ENCODE measurements at regions of chr12 and their contacts with region 1.

Region 1: DNA sequence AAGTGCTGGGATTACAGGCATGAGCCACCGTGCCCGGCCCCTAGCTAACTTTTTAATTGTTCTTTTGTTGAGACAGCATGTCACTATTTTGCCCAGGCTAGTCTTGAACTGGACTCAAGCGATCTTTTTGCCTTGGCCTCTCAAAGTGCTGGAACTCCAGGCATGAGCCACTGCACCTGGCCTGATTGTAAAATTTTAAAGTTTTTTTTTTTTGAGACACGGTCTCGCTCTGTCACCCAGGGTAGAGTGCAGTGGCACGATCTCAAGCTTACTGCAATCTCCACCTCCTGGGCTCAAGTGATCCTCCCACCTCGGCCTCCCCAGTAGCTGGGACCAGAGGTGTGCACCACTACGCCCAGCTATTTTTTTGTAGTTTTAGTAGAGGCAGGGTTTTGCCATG is 79.1 kb upstream of the SINHCAF start:
- DNase-seq: no peak
- ATAC-seq: no peak
- H3K4me3 Mint-ChIP-seq: no peak overlapping the region
- H3K27ac Mint-ChIP-seq: no peak overlapping the region
- H3K4me1 Mint-ChIP-seq: peaks cover 7% of the 10 kb centered on the region
- H3K27me3 Mint-ChIP-seq: no peaks in the 10 kb centered on the region

Region 2: DNA sequence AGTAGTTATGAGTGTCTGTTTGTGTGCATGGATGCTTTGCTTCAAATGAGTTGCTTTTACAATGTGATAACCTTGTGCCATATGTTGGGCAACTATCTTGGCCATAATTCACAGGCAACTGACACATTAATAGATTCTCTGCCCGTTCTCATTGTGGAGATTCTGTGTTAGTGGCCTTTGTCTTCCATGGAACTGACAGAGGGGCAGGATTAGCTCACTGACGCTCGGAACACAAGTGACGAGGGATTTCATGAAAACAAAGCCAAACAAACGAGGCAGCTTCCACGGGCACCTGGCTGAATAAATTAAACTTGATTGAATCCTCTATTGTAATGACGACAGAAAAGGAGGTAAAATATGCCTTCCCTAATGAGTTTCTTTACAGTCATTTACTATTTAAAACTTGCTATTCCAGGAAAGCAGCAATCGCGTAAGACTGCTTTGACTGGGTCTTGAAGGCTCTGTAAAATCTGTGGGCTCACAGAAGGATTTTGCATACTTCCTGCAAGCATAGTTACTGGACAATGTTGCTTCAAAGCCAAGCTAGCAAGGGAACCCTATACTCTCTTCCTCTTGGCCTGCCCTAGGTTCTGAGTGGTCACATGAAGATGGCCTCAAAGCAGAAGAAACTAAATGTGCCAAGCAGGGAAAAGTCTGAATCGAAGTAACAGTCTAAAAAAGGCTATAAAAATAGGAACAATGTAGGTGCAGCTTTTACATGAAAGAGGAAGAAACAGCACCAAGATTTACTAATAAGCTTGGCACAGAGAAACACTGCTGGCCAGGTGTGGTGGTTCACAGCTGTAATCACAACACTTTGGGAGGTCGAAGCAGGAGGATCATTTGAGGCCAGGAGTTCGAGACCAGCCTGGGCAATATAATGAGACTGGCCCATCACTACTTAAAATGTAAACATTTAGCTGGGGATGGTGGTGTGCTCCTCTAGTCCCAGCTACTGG is 51.0 kb before region 1 on chr12:
- CTCF ChIA-PET with region 1: no interaction called
- DNase-seq: no peak
- ATAC-seq: no peak
- H3K4me3 Mint-ChIP-seq: no peak overlapping the region
- H3K27ac Mint-ChIP-seq: no peak overlapping the region
- H3K4me1 Mint-ChIP-seq: no peaks in the 10 kb centered on the region
- H3K27me3 Mint-ChIP-seq: peaks cover 10% of the 10 kb centered on the region

Region 3: GRCh38 chr12:31578632-31579031 is 173.6 kb after region 1 on chr12:
- CTCF ChIA-PET with region 1: no interaction called
- DNase-seq: no peak
- ATAC-seq: no peak
- H3K4me3 Mint-ChIP-seq: no peak overlapping the region
- H3K27ac Mint-ChIP-seq: no peak overlapping the region
- H3K4me1 Mint-ChIP-seq: no peaks in the 10 kb centered on the region
- H3K27me3 Mint-ChIP-seq: peaks cover 9% of the 10 kb centered on the region

Region 4: GRCh38 chr12:31612819-31613218 is 207.8 kb after region 1 on chr12:
- CTCF ChIA-PET with region 1: no interaction called
- DNase-seq: no peak
- ATAC-seq: no peak
- H3K4me3 Mint-ChIP-seq: no peak overlapping the region
- H3K27ac Mint-ChIP-seq: no peak overlapping the region
- H3K4me1 Mint-ChIP-seq: no peaks in the 10 kb centered on the region
- H3K27me3 Mint-ChIP-seq: no peaks in the 10 kb centered on the region

Region 5: GRCh38 chr12:31634620-31635019 is 229.6 kb after region 1 on chr12:
- CTCF ChIA-PET with region 1: interaction called, 20 read pairs
- DNase-seq: no peak
- ATAC-seq: no peak
- H3K4me3 Mint-ChIP-seq: no peak overlapping the region
- H3K27ac Mint-ChIP-seq: no peak overlapping the region
- H3K4me1 Mint-ChIP-seq: peaks cover 5% of the 10 kb centered on the region
- H3K27me3 Mint-ChIP-seq: no peaks in the 10 kb centered on the region

Region 6: DNA sequence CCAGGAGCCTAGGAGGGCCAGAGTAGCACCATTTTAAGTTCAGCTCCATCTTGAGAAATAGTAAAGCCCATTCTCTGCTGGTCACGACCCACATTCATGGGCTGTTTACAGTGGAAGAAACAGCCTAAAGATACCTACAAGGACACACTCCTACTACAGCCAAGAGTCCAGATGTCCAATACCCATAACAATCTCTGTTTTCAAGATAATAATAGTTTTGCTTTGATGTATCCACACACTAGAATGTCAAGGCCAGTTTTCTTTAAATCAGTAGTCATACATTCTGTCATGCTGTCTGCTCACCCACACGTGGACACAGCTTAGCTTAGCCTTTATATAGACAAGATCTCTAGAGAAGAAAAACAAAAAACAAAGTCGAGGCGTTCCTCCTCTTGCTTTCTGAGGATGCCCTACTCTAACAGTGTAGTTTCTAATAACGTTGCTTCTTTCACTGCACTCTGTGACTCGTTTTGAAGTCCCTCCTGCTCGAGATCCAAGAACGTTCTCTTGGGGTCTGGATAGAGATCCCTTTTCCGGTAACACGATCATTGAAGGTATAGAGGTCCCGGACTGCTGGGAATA is 236.6 kb after region 1 on chr12:
- CTCF ChIA-PET with region 1: interaction called, 20 read pairs
- DNase-seq: no peak
- ATAC-seq: no peak
- H3K4me3 Mint-ChIP-seq: no peak overlapping the region
- H3K27ac Mint-ChIP-seq: no peak overlapping the region
- H3K4me1 Mint-ChIP-seq: peaks cover 2% of the 10 kb centered on the region
- H3K27me3 Mint-ChIP-seq: no peaks in the 10 kb centered on the region

Measured in activated CD8-positive, alpha-beta memory T cell treated with anti-CD3 and anti-CD28 coated beads, Interleukin-2, amount 10 ng/mL, durations not matched to agents 7 days and 5 days (primary cell).